ENCODE measurements at regions of chr20 and their contacts with region 1.

Region 1: DNA sequence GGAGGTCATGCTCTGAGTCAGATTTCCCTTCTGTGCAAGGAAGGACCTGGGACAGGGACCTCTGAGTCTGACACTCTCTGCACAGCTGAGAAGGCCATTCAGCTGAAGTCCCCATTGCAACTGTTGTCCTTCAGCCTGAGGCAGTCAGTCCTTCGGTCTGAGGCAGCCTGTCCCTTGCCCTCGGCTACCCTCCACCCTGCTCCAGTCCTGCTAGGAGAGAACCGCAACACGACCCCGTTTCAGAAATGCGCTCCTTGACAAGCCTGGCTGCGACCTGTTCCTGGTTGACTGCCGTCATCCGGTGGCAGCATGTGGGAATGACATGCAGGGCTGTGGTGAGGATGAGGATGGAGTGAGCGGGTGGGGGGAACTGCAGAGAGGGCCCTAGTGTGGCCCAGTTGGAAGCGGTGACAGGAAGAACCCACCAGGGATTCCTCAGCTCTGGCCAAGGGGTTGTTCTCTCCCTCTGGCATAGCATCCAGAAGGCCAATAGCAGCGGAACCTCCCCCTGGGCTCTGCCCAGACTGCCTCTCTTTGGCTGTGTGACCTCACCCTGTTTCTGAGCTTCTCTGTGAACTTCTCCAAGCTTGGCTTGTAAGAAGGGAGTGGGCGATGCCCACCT is 40.3 kb upstream of the ANGPT4 start:
- DNase-seq: peak; percentile 80
- ATAC-seq: peak; percentile 90
- H3K4me3 Mint-ChIP-seq: no peak overlapping the region
- H3K27ac Mint-ChIP-seq: no peak overlapping the region
- H3K4me1 Mint-ChIP-seq: peaks cover 2% of the 10 kb centered on the region
- H3K27me3 Mint-ChIP-seq: peaks cover 34% of the 10 kb centered on the region

Region 2: GRCh38 chr20:825710-826421 is 130.6 kb before region 1 on chr20:
- CTCF ChIA-PET with region 1: interaction called, 10 read pairs
- DNase-seq: peak; percentile 29
- ATAC-seq: no peak
- H3K4me3 Mint-ChIP-seq: no peak overlapping the region
- H3K27ac Mint-ChIP-seq: no peak overlapping the region
- H3K4me1 Mint-ChIP-seq: peaks cover 15% of the 10 kb centered on the region
- H3K27me3 Mint-ChIP-seq: no peaks in the 10 kb centered on the region

Region 3: DNA sequence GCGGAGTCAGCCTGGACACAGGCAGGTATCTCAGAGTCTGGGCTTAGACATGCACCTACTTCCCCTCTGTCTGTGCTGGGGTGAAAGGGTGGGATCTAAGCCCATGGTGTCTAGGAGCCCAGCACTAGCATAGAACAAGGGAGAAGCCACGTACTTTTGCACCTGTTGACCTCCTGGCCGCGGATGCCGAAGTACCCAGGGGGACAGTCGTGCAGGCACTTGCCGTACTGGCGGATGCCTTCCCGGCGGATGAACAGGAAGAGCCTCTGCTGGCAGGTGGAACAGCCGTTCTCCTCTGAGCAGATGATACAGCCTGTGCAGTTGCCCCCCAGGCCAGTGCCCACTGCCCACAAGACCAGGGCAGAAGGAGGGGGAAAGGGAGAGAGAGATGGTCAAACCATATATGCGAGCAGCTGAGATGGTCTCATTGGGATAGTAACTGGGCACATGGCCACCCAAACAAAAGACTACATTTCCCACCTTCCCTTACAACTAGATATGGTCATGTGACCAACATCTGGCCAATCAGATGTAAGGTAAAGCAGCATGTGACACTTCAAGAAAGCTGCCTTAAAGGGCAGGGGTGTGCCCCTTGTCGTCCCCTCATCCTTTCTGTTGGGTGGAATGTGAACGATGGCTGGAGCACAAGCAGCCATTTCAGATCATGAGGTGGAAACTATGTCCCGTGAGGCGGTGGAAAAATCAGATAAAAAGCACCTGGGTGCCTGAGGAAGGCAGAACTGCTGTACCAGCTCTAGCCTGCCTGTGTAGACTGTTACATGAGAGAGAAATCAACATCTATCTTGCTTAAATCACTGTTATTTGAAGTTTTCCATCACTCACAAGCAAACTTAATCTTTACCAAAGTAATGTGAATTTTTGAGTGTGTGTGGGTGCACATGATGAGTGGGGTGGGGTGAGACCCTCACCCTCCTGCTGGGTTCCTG is 11.6 kb after region 1 on chr20:
- CTCF ChIA-PET with region 1: interaction called, 18 read pairs
- DNase-seq: no peak
- ATAC-seq: no peak
- H3K4me3 Mint-ChIP-seq: no peak overlapping the region
- H3K27ac Mint-ChIP-seq: no peak overlapping the region
- H3K4me1 Mint-ChIP-seq: no peaks in the 10 kb centered on the region
- H3K27me3 Mint-ChIP-seq: peaks cover 14% of the 10 kb centered on the region

Region 4: GRCh38 chr20:991850-992249 is 35.4 kb after region 1 on chr20:
- CTCF ChIA-PET with region 1: no interaction called
- DNase-seq: no peak
- ATAC-seq: no peak
- H3K4me3 Mint-ChIP-seq: no peak overlapping the region
- H3K27ac Mint-ChIP-seq: no peak overlapping the region
- H3K4me1 Mint-ChIP-seq: no peaks in the 10 kb centered on the region
- H3K27me3 Mint-ChIP-seq: peaks cover 21% of the 10 kb centered on the region

Region 5: GRCh38 chr20:1108437-1108920 is 152.0 kb after region 1 on chr20:
- CTCF ChIA-PET with region 1: interaction called, 11 read pairs
- DNase-seq: peak; percentile 65
- ATAC-seq: peak; percentile 75
- H3K4me3 Mint-ChIP-seq: no peak overlapping the region
- H3K27ac Mint-ChIP-seq: no peak overlapping the region
- H3K4me1 Mint-ChIP-seq: peaks cover 3% of the 10 kb centered on the region
- H3K27me3 Mint-ChIP-seq: no peaks in the 10 kb centered on the region

Measured in activated CD8-positive, alpha-beta memory T cell treated with anti-CD3 and anti-CD28 coated beads, Interleukin-2, amount 10 ng/mL, durations not matched to agents 7 days and 5 days (primary cell).